B cell (primary cell): ENCODE measurements at regions of chr17 and their contacts with region 1.

Region 1: DNA sequence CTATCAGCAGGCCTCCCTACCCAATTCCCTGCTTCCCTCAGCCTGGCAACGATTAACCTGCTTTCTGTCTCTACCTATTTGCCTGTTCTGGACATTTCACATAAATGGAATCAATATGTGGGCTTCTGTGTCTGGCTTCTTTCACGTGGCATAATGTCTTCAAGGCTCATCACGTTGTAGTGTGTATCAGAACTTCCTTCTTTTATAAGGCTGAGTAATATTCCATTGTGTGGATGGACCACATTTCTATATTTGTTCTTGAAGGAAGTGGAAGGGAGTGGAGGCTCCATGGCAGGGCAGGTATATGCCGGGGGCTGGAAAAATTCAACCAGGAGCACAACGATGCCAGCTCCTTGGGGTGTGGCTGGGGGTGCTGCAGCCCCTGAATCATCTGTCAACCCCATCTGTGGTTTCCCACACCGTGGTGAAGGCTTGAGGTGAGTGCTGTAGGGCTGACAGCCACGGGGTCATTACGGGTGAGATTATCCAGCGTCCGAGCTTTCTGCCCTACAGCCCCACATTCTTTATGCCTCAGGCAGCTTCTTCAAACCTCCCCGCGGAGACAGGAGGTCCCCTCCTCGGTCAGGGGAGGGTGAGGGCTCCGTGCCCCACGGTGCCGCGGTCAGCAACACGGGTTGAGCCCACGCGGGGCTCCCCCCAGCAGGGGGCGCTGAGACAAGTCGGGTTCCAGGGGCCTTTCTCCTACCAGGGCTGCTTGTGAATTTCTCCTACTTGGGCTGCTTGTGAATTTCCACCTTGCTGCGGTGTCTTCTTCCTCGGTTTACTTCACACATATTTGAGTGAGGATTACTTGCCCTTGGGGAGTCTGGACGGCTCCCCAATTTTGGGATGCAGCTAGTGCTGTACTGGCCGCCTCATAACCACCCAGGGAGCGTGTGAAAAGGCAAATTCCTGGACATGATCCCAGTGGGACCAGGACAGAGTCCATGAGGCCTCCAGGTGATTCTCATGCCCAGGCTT is 18.3 kb upstream of the WFIKKN2 start:
- DNase-seq: peak; percentile 66
- ATAC-seq: peak; percentile 51
- H3K4me3 ChIP-seq: no peak overlapping the region
- H3K4me3 Mint-ChIP-seq: no peak overlapping the region
- H3K27ac ChIP-seq: no peak overlapping the region
- H3K27ac Mint-ChIP-seq: no peak overlapping the region
- H3K4me1 ChIP-seq: peaks cover 0 to 7% of the 10 kb centered on the region in 2 donors
- H3K4me1 Mint-ChIP-seq: peaks cover 5% of the 10 kb centered on the region
- H3K27me3 ChIP-seq: peaks cover 0 to 7% (median 2%) of the 10 kb centered on the region in 4 experiments
- H3K27me3 Mint-ChIP-seq: peaks cover 34% of the 10 kb centered on the region
- CTCF ChIP-seq: peak; percentile 85

Region 2: GRCh38 chr17:50949989-50950881 is 133.2 kb after region 1 on chr17:
- CTCF ChIA-PET with region 1: interaction called, 5 read pairs
- POLR2A ChIA-PET with region 1: no interaction called
- intact Hi-C with region 1: loop called (anchors 1 kb)
- DNase-seq: peak; percentile 62
- ATAC-seq: peak; percentile 72
- H3K4me3 ChIP-seq: peak overlapping the region in 1 of 5 experiments; percentile 36
- H3K4me3 Mint-ChIP-seq: peak overlapping the region; percentile 70
- H3K27ac ChIP-seq: no peak overlapping the region
- H3K27ac Mint-ChIP-seq: peak overlapping the region; percentile 27
- H3K4me1 ChIP-seq: peaks cover 10 to 13% of the 10 kb centered on the region in 2 donors
- H3K4me1 Mint-ChIP-seq: peaks cover 10% of the 10 kb centered on the region
- H3K27me3 ChIP-seq: peaks cover 0 to 7% (median 0%) of the 10 kb centered on the region in 4 experiments
- H3K27me3 Mint-ChIP-seq: peaks cover 9% of the 10 kb centered on the region
- CTCF ChIP-seq: no peak